T-cell (primary cell): ENCODE measurements at regions of chr1 and their contacts with region 1.

Region 1: GRCh38 chr1:93148001-93148400 is 32.2 kb downstream of the TMED5 start:
- DNase-seq: no peak
- ATAC-seq: no peak
- H3K4me3 ChIP-seq: no peak overlapping the region
- H3K4me3 Mint-ChIP-seq: no peak overlapping the region
- H3K27ac ChIP-seq: no peak overlapping the region
- H3K27ac Mint-ChIP-seq: peak overlapping the region; percentile 25 to 41
- H3K4me1 ChIP-seq: no peaks in the 10 kb centered on the region
- H3K4me1 Mint-ChIP-seq: peaks cover 0 to 4% (median 2%) of the 10 kb centered on the region in 3 donors
- H3K27me3 ChIP-seq: no peaks in the 10 kb centered on the region
- H3K27me3 Mint-ChIP-seq: no peaks in the 10 kb centered on the region

Region 2: GRCh38 chr1:92709738-92710137 is 438.3 kb before region 1 on chr1:
- CTCF ChIA-PET with region 1: no interaction called
- POLR2A ChIA-PET with region 1: no interaction called
- DNase-seq: no peak
- ATAC-seq: no peak
- H3K4me3 ChIP-seq: no peak overlapping the region
- H3K4me3 Mint-ChIP-seq: no peak overlapping the region
- H3K27ac ChIP-seq: no peak overlapping the region
- H3K27ac Mint-ChIP-seq: no peak overlapping the region
- H3K4me1 ChIP-seq: no peaks in the 10 kb centered on the region
- H3K4me1 Mint-ChIP-seq: no peaks in the 10 kb centered on the region
- H3K27me3 ChIP-seq: no peaks in the 10 kb centered on the region
- H3K27me3 Mint-ChIP-seq: peaks cover 0 to 3% of the 10 kb centered on the region in 2 donors

Region 3: DNA sequence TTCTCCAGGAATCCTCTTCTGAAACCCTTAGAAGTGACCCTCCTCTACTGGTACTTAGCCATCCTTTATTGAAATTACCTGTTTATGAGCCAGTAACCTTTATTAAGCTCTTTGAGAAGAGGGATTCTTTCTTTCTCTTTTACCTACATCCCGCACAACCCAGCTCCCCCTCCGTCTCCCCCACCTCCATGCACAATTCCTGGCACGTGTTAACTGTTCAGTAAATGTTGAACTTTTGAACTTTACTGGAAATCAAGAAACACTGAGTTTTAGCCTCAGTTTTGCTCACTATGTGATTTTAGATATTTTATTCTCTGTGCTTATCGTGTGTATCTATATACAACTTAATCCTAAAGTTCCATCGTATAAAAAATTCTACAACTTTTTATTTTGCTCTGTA is 30.4 kb after region 1 on chr1:
- CTCF ChIA-PET with region 1: no interaction called
- POLR2A ChIA-PET with region 1: interaction called in 1 of 2 experiments, 11 read pairs
- DNase-seq: no peak
- ATAC-seq: no peak
- H3K4me3 ChIP-seq: peak overlapping the region in 1 of 2 donors; percentile 100
- H3K4me3 Mint-ChIP-seq: peak overlapping the region; percentile 88 to 94 (median 92)
- H3K27ac ChIP-seq: no peak overlapping the region
- H3K27ac Mint-ChIP-seq: peak overlapping the region in 1 of 2 donors; percentile 36
- H3K4me1 ChIP-seq: peaks cover 23 to 33% of the 10 kb centered on the region in 2 experiments
- H3K4me1 Mint-ChIP-seq: peaks cover 50 to 71% (median 63%) of the 10 kb centered on the region in 3 donors
- H3K27me3 ChIP-seq: no peaks in the 10 kb centered on the region
- H3K27me3 Mint-ChIP-seq: no peaks in the 10 kb centered on the region